ENCODE measurements at regions of chr3 and their contacts with region 1.

Region 1: GRCh38 chr3:159637883-159638542 is 350.6 kb upstream of the IL12A start:
- DNase-seq: peak; percentile 79
- ATAC-seq: peak; percentile 89
- H3K4me3 ChIP-seq: no peak overlapping the region
- H3K27ac ChIP-seq: no peak overlapping the region
- H3K4me1 ChIP-seq: peaks cover 12% of the 10 kb centered on the region
- H3K27me3 ChIP-seq: no peaks in the 10 kb centered on the region; the same call in 1 of the 2 replicates
- CTCF ChIP-seq: no peak
- POLR2A ChIP-seq: no peak
- RAD21 ChIP-seq: no peak

Region 2: DNA sequence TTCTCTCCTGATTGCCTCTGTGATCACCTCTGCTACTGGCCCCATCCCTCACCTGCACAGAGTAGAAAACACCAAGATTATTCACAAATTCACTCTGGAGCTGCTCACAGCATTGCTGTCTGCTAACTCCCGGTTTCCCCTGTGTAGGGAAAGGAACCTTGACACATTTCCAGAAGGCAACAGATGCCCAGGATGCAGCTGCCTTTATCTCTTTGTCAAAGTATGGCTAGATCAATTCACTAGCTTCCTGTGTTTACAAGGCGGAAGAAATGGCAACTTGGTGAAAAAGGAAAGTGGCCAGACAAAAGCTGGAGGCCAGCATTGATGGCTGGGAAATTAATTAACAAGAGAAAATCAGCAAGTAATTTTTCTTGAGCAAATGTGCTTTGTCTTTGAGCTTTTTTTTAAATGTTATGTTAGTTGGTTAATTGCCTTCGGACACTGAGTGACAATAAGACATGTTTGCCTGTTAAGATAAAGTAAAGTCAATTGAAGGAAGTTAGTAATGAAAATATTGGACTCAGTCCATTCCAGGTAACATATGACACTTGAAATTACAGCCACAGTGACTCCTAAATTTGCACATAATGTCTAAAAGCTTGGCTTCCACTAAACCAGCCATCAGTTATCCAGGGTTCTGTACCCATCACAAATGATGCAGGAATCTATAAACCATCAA is 43.9 kb before region 1 on chr3:
- CTCF ChIA-PET with region 1: no interaction called
- POLR2A ChIA-PET with region 1: no interaction called
- dilution Hi-C with region 1: no loop called
- in situ Hi-C with region 1: no loop called
- intact Hi-C with region 1: no loop called
- DNase-seq: no peak
- ATAC-seq: no peak
- H3K4me3 ChIP-seq: no peak overlapping the region
- H3K27ac ChIP-seq: no peak overlapping the region
- H3K4me1 ChIP-seq: no peaks in the 10 kb centered on the region
- H3K27me3 ChIP-seq: peaks cover 20% of the 10 kb centered on the region
- CTCF ChIP-seq: no peak
- POLR2A ChIP-seq: no peak
- RAD21 ChIP-seq: no peak

Region 3: DNA sequence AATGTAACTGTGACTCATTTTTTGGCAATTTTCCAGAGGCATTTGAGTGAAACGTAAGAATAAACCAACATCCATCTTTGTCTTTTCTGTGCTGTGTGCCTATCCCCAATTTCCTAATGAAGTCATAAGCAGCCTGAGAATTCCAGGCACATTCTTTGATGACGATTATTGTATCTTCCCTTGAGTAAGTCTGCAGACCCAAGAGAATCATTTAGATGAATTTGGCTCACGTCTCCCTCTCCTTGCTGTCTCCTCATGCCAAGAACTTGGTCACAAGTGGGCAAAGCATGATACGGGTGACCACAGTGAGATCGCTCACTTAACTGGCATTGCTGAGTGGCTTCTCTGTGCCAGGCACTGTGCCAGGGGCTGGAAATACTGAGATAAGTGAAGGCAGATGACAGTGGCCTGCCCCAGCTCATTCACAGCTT is 33.8 kb before region 1 on chr3:
- CTCF ChIA-PET with region 1: no interaction called
- POLR2A ChIA-PET with region 1: no interaction called
- dilution Hi-C with region 1: no loop called
- in situ Hi-C with region 1: no loop called
- intact Hi-C with region 1: no loop called
- DNase-seq: peak; percentile 68
- ATAC-seq: peak; percentile 49; the same call in 1 of the 2 replicates
- H3K4me3 ChIP-seq: no peak overlapping the region
- H3K27ac ChIP-seq: no peak overlapping the region; the same call in 1 of the 2 replicates
- H3K4me1 ChIP-seq: peaks cover 2% of the 10 kb centered on the region; the same call in 1 of the 2 replicates
- H3K27me3 ChIP-seq: no peaks in the 10 kb centered on the region
- CTCF ChIP-seq: no peak
- POLR2A ChIP-seq: no peak
- RAD21 ChIP-seq: no peak

Region 4: GRCh38 chr3:159732172-159733111 is 94.4 kb after region 1 on chr3:
- CTCF ChIA-PET with region 1: no interaction called
- POLR2A ChIA-PET with region 1: no interaction called
- dilution Hi-C with region 1: no loop called
- in situ Hi-C with region 1: no loop called
- intact Hi-C with region 1: loop called (anchors 5 kb)
- DNase-seq: peak; percentile 86
- ATAC-seq: peak; percentile 82
- H3K4me3 ChIP-seq: peak overlapping the region; percentile 41; the same call in 1 of the 2 replicates
- H3K27ac ChIP-seq: peak overlapping the region; percentile 82
- H3K4me1 ChIP-seq: peaks cover 15% of the 10 kb centered on the region
- H3K27me3 ChIP-seq: no peaks in the 10 kb centered on the region
- CTCF ChIP-seq: no peak
- POLR2A ChIP-seq: no peak; the same call in 1 of the 2 replicates
- RAD21 ChIP-seq: peak; percentile 13; the same call in 1 of the 2 replicates